BJ (cell line): ENCODE measurements at regions of chr10 and their contacts with region 1.

Region 1: GRCh38 chr10:35916791-35917190 is 274.7 kb upstream of the FZD8 start:
- DNase-seq: no peak
- H3K4me3 ChIP-seq: no peak overlapping the region
- H3K27me3 ChIP-seq: peaks cover under 1% of the 10 kb centered on the region; the same call in 1 of the 2 replicates
- CTCF ChIP-seq: peak; percentile 70

Region 2: DNA sequence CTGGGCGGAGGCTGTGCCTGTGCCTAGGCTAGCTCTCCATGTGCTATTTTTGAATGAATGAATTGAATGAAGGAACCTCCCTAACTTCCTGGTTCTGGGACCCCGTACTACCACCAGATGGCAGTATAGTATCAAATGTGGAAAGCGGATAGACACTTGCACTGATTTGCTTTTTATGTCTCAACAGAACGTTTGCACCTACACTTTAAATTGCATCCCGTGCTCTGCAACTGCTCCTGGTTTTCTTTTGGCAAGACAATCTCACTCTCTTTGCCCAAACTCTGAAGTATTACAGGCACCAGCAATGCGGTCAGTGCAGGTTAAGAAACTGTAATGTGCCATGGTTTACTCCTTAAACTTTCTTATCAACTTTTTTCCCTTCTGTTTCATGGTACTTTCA is 281.2 kb before region 1 on chr10:
- CTCF ChIA-PET with region 1: interaction called, 205 read pairs
- POLR2A ChIA-PET with region 1: no interaction called
- DNase-seq: no peak
- H3K4me3 ChIP-seq: no peak overlapping the region
- H3K27me3 ChIP-seq: peaks cover 4% of the 10 kb centered on the region
- CTCF ChIP-seq: peak; percentile 86

Region 3: DNA sequence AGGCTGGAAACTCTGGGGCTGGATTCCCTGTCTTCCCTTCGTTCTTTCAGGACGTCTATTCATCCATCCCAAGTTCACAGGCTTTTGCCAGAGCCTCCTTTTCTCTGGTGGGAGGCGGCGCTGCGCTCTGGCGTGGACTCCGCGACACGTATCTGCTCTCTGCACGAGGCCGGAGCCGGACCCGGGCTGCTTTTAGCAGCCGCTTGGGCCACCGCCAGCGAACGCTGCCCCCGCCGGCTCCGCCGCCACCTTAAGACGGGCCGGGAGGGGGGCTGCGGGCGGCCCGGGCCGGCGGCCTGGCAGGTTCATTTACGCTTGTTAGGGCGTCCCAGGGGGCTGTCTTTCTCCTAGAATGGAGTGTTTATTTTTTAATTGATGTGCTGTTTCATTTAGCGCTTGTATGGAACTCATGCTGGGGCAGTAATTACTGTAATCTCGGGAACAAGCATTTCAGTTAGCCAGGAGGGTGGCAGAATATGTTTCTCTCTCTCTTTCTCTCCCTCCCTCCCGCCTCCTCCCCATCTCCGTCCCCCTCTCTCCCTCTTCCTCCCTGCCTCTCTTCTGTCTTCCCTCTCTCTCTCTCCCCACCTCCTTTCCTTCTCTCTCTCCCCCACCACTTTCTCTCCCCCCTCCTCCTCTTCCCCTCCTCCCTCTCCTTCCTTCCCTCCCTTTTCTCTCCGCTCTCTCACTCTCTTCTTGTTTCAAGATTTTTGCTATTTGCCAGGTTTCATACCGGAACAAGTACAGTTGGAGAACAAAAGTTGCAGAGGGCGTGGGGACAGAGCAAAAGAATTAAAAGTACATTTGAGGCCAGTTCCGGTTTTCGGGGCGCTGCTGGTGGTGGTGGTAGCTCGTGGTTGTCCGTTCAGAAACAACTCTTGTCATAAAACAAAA is 273.4 kb before region 1 on chr10:
- CTCF ChIA-PET with region 1: interaction called, 205 read pairs
- POLR2A ChIA-PET with region 1: no interaction called
- DNase-seq: no peak
- H3K4me3 ChIP-seq: peak overlapping the region; percentile 67
- H3K27me3 ChIP-seq: peaks cover 10% of the 10 kb centered on the region
- CTCF ChIP-seq: no peak

Region 4: GRCh38 chr10:35781643-35782035 is 135.2 kb before region 1 on chr10:
- CTCF ChIA-PET with region 1: interaction called, 11 read pairs
- POLR2A ChIA-PET with region 1: no interaction called
- DNase-seq: no peak
- H3K4me3 ChIP-seq: no peak overlapping the region
- H3K27me3 ChIP-seq: no peaks in the 10 kb centered on the region; the same call in none of the 2 replicates
- CTCF ChIP-seq: no peak

Region 5: DNA sequence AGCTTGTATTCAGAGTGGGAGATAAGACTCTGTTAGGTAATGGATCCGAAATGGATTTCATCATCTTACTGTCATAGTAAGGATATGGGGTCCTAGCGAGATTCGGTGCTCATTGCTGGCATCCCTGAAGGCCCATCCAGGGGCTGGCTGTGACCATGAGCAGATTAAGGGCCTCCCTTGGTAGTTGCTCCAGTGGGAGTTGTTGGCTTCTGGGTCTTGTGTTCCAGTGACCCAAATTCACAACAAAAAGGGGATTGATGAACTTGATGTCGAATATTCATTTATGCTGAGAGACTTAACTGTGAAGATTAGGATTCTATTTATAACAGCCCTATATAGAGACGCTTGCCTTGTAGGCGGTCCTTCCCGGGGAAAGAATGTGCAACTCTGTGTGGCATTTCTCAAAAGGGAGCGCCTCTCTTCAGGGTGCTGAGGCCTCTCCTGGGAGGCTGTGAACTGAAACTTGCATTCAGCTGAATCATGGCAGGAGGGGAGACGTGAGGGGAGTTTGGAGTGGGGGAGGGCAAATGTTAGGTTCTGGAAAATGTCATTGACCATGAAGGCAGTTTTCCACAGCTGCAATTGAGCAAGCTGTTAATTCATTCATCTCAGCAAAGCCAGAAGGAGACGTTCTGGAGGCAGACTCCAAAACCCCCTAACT is 41.6 kb before region 1 on chr10:
- CTCF ChIA-PET with region 1: interaction called, 10 read pairs
- POLR2A ChIA-PET with region 1: no interaction called
- DNase-seq: no peak
- H3K4me3 ChIP-seq: no peak overlapping the region
- H3K27me3 ChIP-seq: no peaks in the 10 kb centered on the region
- CTCF ChIP-seq: no peak

Region 6: DNA sequence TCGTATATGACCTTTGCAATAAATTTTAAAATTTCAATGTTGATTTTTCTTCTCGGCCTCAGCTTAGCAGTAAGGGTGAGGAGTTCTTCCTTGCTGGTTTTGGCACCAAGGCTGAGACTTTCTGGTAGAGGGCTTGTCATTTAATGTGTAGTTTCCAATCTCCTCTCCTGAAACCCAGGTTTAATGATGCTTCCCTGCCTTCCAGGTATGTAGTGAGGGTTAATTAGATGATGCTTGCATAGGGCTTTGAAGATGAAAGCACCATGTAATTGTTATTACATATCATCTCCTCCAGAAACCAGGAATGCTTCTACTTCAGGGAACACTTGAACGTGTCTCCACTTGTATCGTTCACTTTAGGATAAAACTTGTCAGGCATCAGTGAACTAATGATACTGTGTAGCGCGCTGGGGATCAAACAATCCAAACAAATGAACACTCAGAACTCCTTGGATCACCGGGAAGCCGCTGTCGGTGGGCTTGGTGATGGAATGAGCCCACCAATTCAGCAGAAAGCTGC is 13.8 kb before region 1 on chr10:
- CTCF ChIA-PET with region 1: interaction called, 12 read pairs
- POLR2A ChIA-PET with region 1: no interaction called
- DNase-seq: no peak
- H3K4me3 ChIP-seq: no peak overlapping the region
- H3K27me3 ChIP-seq: no peaks in the 10 kb centered on the region
- CTCF ChIP-seq: no peak